ENCODE measurements at regions of chr15 and their contacts with region 1.

Region 1: DNA sequence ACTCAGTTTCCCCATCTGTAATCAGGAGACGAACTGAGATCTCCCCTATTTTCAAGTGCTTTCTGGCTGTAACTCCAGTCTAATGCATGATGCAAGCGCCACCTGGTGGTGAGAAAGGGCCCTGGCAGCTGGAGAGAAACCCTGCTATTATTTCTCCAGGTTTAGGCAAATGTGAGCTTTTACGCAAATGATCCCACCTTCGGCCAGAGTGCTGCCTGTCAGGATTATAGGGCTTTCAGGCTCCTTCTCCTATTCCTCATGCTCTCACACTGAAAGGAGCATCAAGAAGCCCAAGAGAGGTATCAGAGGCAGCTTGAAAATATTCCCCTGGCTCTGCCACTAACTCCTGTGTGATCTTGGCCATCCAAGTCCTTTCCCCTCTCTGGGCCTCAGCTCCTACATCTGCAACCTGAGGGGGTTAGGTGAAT is 93.9 kb upstream of the RASGRF1 start:
- DNase-seq: peak; percentile 44 to 62 (median 52)
- H3K4me3 ChIP-seq: no peak overlapping the region
- H3K4me3 Mint-ChIP-seq: no peak overlapping the region
- H3K27ac ChIP-seq: no peak overlapping the region
- H3K27ac Mint-ChIP-seq: no peak overlapping the region
- H3K4me1 ChIP-seq: no peaks in the 10 kb centered on the region
- H3K4me1 Mint-ChIP-seq: peaks cover 0 to 2% (median 0%) of the 10 kb centered on the region in 4 donors
- H3K27me3 ChIP-seq: no peaks in the 10 kb centered on the region
- H3K27me3 Mint-ChIP-seq: peaks cover 7 to 12% of the 10 kb centered on the region in 2 donors

Region 2: DNA sequence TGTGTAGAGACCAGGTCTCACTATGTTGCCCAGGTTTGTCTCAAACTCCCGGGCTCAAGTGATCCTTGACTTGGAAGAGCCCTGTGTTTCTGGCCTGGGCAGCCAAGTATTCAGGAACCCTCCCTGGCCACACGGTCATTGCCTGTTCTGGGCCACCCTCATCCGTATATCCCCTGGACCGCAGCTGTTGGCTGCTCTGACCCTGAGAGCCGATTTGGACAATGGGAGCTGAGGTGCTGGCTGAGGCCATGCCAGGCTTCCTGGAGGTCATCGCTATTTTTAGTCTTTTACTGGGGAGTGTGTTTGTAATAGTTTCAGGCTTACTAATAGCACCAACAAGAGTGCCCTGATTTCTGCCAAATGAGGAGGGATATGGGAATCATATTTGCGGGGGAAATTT is 433.9 kb before region 1 on chr15:
- CTCF ChIA-PET with region 1: no interaction called
- POLR2A ChIA-PET with region 1: no interaction called
- intact Hi-C with region 1: loop called (anchors 10 kb)
- DNase-seq: peak in 1 of 5 donors; percentile 5
- H3K4me3 ChIP-seq: no peak overlapping the region
- H3K4me3 Mint-ChIP-seq: peak overlapping the region in 6 of 8 donors; percentile 36 to 73 (median 51)
- H3K27ac ChIP-seq: no peak overlapping the region
- H3K27ac Mint-ChIP-seq: peak overlapping the region in 2 of 7 donors; percentile 46 to 57
- H3K4me1 ChIP-seq: no peaks in the 10 kb centered on the region
- H3K4me1 Mint-ChIP-seq: peaks cover 2 to 9% (median 4%) of the 10 kb centered on the region in 4 donors
- H3K27me3 ChIP-seq: no peaks in the 10 kb centered on the region
- H3K27me3 Mint-ChIP-seq: no peaks in the 10 kb centered on the region

Region 3: DNA sequence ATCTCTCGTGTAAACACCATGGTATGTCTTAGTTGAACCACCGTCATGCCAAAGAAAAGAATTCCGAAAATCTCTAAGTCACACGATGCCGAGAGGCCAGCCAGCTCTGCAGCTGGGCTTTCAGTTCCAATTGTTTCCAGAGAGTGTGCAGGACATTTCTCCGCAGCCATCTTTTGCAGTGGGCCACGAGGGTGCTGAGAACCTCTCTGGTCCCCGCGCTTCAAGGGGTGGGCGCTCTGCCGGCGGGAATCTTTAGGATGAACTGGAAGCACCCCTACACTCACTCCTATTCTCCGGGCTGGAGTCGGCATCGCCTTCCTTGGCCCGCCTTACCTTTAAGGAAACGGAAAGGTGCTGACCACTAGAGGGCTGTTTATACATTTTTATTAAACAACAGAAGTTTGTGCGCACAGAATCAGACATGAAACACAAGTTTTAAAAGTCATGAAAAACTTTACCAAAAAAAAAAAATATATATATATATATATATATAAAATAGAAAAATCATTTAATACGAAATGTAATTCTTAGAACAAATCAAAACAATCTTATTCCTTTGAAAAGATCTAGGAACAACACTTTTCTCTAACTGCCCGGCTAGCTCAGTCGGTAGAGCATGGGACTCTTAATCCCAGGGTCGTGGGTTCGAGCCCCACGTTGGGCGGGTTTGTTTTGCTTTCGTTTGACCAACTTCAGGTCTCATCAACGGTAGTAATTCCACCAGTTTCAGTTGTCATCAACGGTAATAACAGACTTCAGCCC is 324.3 kb before region 1 on chr15:
- CTCF ChIA-PET with region 1: interaction called, 10 read pairs
- POLR2A ChIA-PET with region 1: no interaction called
- intact Hi-C with region 1: no loop called
- DNase-seq: peak; percentile 63 to 86 (median 67)
- H3K4me3 ChIP-seq: peak overlapping the region in 1 of 2 donors; percentile 47
- H3K4me3 Mint-ChIP-seq: peak overlapping the region; percentile 77 to 92 (median 84)
- H3K27ac ChIP-seq: no peak overlapping the region
- H3K27ac Mint-ChIP-seq: peak overlapping the region; percentile 36 to 98 (median 82)
- H3K4me1 ChIP-seq: peaks cover 3% of the 10 kb centered on the region
- H3K4me1 Mint-ChIP-seq: peaks cover 3 to 10% (median 5%) of the 10 kb centered on the region in 4 donors
- H3K27me3 ChIP-seq: no peaks in the 10 kb centered on the region
- H3K27me3 Mint-ChIP-seq: peaks cover 0 to 2% of the 10 kb centered on the region in 2 donors

Region 4: GRCh38 chr15:78909791-78910228 is 274.7 kb before region 1 on chr15:
- CTCF ChIA-PET with region 1: interaction called, 6 read pairs
- POLR2A ChIA-PET with region 1: no interaction called
- intact Hi-C with region 1: loop called (anchors 1 kb)
- DNase-seq: peak in 4 of 5 donors; percentile 14 to 30 (median 20)
- H3K4me3 ChIP-seq: no peak overlapping the region
- H3K4me3 Mint-ChIP-seq: no peak overlapping the region
- H3K27ac ChIP-seq: no peak overlapping the region
- H3K27ac Mint-ChIP-seq: peak overlapping the region in 6 of 7 donors; percentile 24 to 82 (median 47)
- H3K4me1 ChIP-seq: peaks cover 6% of the 10 kb centered on the region
- H3K4me1 Mint-ChIP-seq: peaks cover 22 to 31% (median 28%) of the 10 kb centered on the region in 4 donors
- H3K27me3 ChIP-seq: no peaks in the 10 kb centered on the region
- H3K27me3 Mint-ChIP-seq: no peaks in the 10 kb centered on the region

Region 5: DNA sequence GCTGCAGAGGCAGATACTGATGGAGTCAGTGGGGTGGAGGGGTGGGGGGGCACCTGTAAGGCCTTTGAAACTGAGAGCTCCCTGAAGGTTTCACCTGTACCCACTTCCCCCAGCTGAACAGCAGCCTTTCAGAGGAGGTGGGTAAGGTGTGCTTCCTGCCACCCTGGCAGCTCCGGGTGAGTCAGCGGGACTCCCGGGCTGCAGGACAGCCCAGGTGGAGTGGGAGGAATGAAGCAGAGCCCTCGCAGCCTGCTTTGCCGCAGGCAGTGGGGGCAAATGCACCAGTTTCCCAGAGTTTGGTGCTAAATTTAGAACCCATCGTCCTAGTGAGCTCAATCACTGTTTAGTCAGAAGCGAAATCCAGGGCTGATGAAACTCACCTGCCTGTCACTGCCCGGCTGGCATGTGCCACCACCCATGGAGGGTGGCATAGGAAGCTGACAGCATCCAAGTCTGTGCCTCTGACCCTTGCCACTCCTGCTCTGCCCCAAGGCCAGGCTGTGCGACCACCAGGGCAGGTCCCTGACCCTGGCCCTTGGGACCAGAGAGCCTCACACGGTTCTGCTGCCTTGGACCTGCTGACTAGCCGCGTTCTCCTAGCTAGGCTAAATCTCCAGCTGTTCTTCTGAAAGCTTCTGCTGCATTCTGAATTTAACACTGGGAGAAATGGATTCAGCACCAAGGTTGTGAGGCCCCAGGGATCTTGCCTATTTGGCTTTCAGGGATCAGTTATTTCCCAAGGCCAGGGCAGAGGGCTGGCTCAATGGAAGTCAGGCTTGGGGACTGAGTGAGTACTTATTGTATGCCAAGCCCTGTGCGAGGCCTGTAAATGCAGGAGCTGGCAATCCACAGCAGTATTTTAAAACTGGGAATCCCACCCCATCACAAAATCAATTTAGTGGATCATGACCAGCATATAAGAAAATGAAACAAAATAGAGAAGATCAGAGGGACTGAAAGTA is 26.6 kb before region 1 on chr15:
- CTCF ChIA-PET with region 1: interaction called, 14 read pairs
- POLR2A ChIA-PET with region 1: no interaction called
- intact Hi-C with region 1: no loop called
- DNase-seq: no peak
- H3K4me3 ChIP-seq: no peak overlapping the region
- H3K4me3 Mint-ChIP-seq: no peak overlapping the region
- H3K27ac ChIP-seq: no peak overlapping the region
- H3K27ac Mint-ChIP-seq: no peak overlapping the region
- H3K4me1 ChIP-seq: no peaks in the 10 kb centered on the region
- H3K4me1 Mint-ChIP-seq: no peaks in the 10 kb centered on the region
- H3K27me3 ChIP-seq: peaks cover 3% of the 10 kb centered on the region
- H3K27me3 Mint-ChIP-seq: peaks cover 3 to 15% of the 10 kb centered on the region in 2 donors

Region 6: GRCh38 chr15:79172801-79173460 is 11.5 kb before region 1 on chr15:
- CTCF ChIA-PET with region 1: interaction called, 26 read pairs
- POLR2A ChIA-PET with region 1: no interaction called
- intact Hi-C with region 1: no loop called
- DNase-seq: no peak
- H3K4me3 ChIP-seq: no peak overlapping the region
- H3K4me3 Mint-ChIP-seq: no peak overlapping the region
- H3K27ac ChIP-seq: no peak overlapping the region
- H3K27ac Mint-ChIP-seq: no peak overlapping the region
- H3K4me1 ChIP-seq: no peaks in the 10 kb centered on the region
- H3K4me1 Mint-ChIP-seq: no peaks in the 10 kb centered on the region
- H3K27me3 ChIP-seq: no peaks in the 10 kb centered on the region
- H3K27me3 Mint-ChIP-seq: peaks cover 29% of the 10 kb centered on the region in 2 donors

Region 7: GRCh38 chr15:79208179-79208578 is 23.7 kb after region 1 on chr15:
- CTCF ChIA-PET with region 1: interaction called, 12 read pairs
- POLR2A ChIA-PET with region 1: no interaction called
- intact Hi-C with region 1: no loop called
- DNase-seq: no peak
- H3K4me3 ChIP-seq: no peak overlapping the region
- H3K4me3 Mint-ChIP-seq: no peak overlapping the region
- H3K27ac ChIP-seq: no peak overlapping the region
- H3K27ac Mint-ChIP-seq: no peak overlapping the region
- H3K4me1 ChIP-seq: no peaks in the 10 kb centered on the region
- H3K4me1 Mint-ChIP-seq: no peaks in the 10 kb centered on the region
- H3K27me3 ChIP-seq: peaks cover 4% of the 10 kb centered on the region
- H3K27me3 Mint-ChIP-seq: peaks cover 24 to 39% of the 10 kb centered on the region in 2 donors